ENCODE measurements at regions of chr12 and their contacts with region 1.

Region 1: GRCh38 chr12:56759263-56759908 is 3.7 kb upstream of the HSD17B6 start:
- DNase-seq: no peak
- H3K4me3 ChIP-seq: no peak overlapping the region
- H3K27ac ChIP-seq: peak overlapping the region in 1 of 4 donors; percentile 1
- H3K4me1 ChIP-seq: peaks cover 0 to 4% (median 0%) of the 10 kb centered on the region in 3 donors
- H3K27me3 ChIP-seq: no peaks in the 10 kb centered on the region
- CTCF ChIP-seq: no peak
- POLR2A ChIP-seq: no peak

Region 2: DNA sequence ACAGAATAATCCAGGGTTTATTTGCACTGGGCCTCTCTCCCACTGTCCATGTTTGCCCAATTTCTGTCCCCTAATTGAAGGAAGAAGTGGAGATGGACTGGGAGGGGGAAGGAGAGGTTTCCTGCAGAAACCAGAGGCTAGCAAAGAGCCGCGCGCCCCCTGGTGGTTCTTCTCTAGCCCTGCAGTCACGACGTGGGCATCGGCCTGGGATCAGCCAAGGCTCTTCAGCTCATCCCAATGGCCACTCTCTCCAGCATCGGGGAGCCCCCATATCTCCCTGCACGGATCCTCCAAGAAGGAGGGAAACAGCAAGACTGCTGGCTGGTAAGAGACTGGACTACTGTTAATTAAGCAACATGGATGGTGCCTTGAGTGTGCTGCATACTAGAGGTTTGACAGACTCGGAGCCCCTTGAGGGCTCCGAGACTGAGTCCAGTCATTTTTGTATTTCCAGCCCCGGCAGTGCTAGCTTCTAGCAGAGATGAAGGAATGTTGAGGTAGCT is 228.2 kb after region 1 on chr12:
- intact Hi-C with region 1: loop called (anchors 5 kb)
- DNase-seq: no peak
- H3K4me3 ChIP-seq: no peak overlapping the region
- H3K27ac ChIP-seq: peak overlapping the region in 1 of 4 donors; percentile 31
- H3K4me1 ChIP-seq: peaks cover 27 to 52% (median 37%) of the 10 kb centered on the region in 3 donors
- H3K27me3 ChIP-seq: no peaks in the 10 kb centered on the region
- CTCF ChIP-seq: peak; percentile 94 to 98 (median 96)
- POLR2A ChIP-seq: no peak

Region 3: GRCh38 chr12:57430931-57431720 is 671.7 kb after region 1 on chr12 and contains the start of gene R3HDM2:
- intact Hi-C with region 1: no loop called
- DNase-seq: peak; percentile 69
- H3K4me3 ChIP-seq: peak within 1 kb of the TSS; percentile 81 to 95 (median 84)
- H3K27ac ChIP-seq: peak within 1 kb of the TSS; percentile 96 to 99 (median 98)
- H3K4me1 ChIP-seq: peaks cover 5 to 25% (median 11%) of the 10 kb centered on the region in 3 donors
- H3K27me3 ChIP-seq: no peaks in the 10 kb centered on the region
- CTCF ChIP-seq: peak in 2 of 6 experiments; percentile 14 to 20
- POLR2A ChIP-seq: peak in 3 of 4 donors; percentile 41 to 90 (median 84)
- total RNA-seq, gene R3HDM2: 21.7 to 37.6 (median 29.3) TPM

Region 4: DNA sequence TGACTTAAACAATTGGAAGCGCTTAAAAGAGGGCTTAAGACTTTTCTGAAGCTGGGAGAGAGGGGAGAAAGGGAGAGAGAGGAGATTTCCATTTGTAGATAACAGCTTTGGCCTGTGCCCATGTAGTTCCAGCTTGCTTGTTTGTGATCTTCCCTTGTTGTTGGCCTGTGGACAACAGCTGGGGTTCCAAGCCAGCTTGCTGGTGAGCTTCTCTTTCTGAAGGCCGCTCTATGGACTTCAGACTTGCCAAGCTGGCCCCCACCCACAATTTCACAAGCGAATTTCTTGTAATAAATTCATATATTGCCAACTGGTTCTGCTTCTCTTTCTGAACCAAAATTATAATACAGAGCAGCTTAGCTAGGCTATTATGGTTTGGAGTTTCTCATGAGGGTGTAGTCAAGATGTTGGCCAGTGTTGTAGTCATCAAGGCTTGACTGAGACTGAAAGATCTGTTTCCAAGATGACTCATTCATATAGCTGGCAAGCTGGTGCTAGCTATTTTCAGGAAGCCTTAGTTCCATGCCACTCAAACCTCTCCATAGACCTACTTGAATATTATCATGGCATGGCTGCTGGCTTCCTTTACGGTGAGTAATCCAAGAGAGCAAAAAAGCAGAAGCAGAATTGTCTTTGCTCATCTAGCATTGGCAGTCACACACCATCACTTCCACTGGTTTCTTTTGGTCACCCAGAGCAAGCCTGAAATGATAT is 1271.3 kb after region 1 on chr12:
- intact Hi-C with region 1: no loop called
- DNase-seq: no peak
- H3K4me3 ChIP-seq: no peak overlapping the region
- H3K27ac ChIP-seq: peak overlapping the region; percentile 64 to 90 (median 83)
- H3K4me1 ChIP-seq: peaks cover 12 to 92% (median 30%) of the 10 kb centered on the region in 3 donors
- H3K27me3 ChIP-seq: no peaks in the 10 kb centered on the region
- CTCF ChIP-seq: no peak
- POLR2A ChIP-seq: no peak

Measured in esophagus squamous epithelium (tissue), 5 donors.